ENCODE measurements at regions of chr11 and their contacts with region 1.

Region 1: DNA sequence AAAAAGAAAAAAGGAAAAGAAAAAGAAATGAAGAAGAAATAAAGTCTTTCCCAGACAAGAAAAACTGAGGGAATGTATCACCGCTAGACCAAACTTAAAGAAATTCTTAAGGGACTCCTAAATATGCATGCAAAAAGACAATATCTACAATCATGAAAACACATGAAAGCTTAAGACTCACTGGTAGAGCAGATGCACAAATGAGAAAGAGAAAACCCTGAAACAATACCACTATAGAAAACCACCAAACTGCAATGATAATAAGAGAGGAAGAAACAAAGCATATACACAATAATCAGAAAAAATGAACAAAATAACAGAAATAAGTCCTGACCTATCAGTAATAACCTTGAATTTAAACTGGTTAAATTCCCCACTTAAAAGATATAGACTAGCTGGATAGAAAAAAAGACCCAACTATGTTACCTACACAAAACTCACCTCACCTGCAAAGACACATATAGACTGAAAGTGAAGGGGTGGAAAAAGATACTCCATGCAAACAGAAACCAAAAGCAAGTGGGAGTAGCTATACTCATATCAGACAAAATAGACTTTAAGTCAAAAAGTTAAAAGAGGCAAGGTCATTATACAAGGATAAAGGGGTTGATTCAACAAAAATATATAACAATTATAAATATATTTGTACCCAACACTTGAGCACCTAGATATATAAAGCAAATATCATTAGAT is 61.3 kb upstream of the NARS2 start:
- DNase-seq: no peak
- ATAC-seq: peak; percentile 83
- H3K4me3 Mint-ChIP-seq: no peak overlapping the region
- H3K27ac Mint-ChIP-seq: peak overlapping the region; percentile 4
- H3K4me1 Mint-ChIP-seq: peaks cover 19% of the 10 kb centered on the region
- H3K27me3 Mint-ChIP-seq: peaks cover 17% of the 10 kb centered on the region

Region 2: DNA sequence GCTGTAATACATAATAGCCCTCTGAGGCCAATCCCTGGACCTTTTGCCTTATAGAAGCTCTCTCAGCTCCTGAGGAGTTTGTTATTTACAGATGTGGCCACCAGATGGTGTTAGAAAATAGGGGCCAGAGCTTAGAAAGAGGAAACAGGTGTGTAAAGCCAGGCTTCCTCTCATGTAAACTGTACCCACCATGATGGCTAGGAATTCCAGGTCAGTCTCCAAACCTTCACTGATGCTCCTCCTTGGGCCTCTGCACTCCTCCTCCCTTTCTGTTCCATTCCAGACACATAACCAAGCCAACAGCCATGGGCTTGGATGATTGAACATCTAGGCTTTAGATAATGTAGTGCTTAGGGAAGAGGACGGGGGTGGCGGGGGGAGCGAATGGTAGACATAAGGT is 407.5 kb before region 1 on chr11:
- CTCF ChIA-PET with region 1: no interaction called
- POLR2A ChIA-PET with region 1: no interaction called
- intact Hi-C with region 1: no loop called
- DNase-seq: no peak
- ATAC-seq: no peak
- H3K4me3 Mint-ChIP-seq: no peak overlapping the region
- H3K27ac Mint-ChIP-seq: no peak overlapping the region
- H3K4me1 Mint-ChIP-seq: peaks cover 26% of the 10 kb centered on the region
- H3K27me3 Mint-ChIP-seq: no peaks in the 10 kb centered on the region

Region 3: GRCh38 chr11:78542007-78542406 is 94.0 kb before region 1 on chr11:
- CTCF ChIA-PET with region 1: no interaction called
- POLR2A ChIA-PET with region 1: no interaction called
- intact Hi-C with region 1: no loop called
- DNase-seq: no peak
- ATAC-seq: no peak
- H3K4me3 Mint-ChIP-seq: no peak overlapping the region
- H3K27ac Mint-ChIP-seq: no peak overlapping the region
- H3K4me1 Mint-ChIP-seq: peaks cover 9% of the 10 kb centered on the region
- H3K27me3 Mint-ChIP-seq: no peaks in the 10 kb centered on the region

Region 4: DNA sequence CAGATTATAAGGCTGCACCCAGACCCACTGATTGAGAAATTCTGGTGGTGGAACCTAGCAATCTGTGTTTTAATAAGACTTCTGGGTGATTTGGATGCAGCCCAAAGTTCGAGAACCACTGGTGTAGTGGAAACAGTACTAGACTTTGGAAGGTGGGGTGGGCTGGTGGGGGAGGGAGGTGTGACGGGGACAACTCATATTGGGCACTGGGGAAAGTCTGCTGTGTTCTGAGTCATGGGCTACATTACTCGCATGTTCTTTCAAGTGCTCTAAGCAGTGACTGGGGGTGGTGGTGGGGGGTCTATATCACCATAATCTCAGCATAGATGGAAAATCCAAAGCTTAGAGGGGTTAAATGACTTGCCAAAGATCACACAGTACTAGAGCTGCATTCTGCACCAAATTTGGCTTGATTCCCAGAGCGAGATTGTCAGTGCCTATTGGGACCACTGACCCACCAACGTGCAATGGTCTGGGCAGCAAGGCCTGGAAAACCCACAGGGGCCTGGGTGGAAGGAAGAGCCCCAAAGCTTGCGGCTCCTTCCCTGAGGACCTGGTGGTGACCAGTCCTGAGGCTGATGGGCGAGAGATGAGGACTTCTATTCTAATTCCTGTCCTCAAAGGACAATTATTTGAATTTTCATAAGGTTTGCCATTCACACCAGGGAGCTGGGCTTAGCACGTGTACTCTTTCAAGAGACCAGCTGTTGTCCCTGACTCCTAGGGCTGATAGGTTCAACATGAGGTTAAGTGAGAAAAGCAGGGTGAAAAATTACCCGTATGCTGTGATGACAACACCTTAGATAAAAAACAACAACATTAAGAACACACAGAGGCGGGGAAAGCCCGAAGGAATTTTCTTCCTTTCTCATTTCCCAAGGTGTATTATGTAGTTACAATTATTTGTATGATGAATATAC is 16.2 kb after region 1 on chr11:
- CTCF ChIA-PET with region 1: no interaction called
- POLR2A ChIA-PET with region 1: no interaction called
- intact Hi-C with region 1: loop called in 1 of 2 experiments (anchors 1 kb)
- DNase-seq: peak; percentile 80
- ATAC-seq: peak; percentile 92
- H3K4me3 Mint-ChIP-seq: no peak overlapping the region
- H3K27ac Mint-ChIP-seq: peak overlapping the region; percentile 70
- H3K4me1 Mint-ChIP-seq: peaks cover 40% of the 10 kb centered on the region
- H3K27me3 Mint-ChIP-seq: peaks cover 3% of the 10 kb centered on the region